ENCODE measurements at regions of chr11 and their contacts with region 1.

Region 1: GRCh38 chr11:116835791-116836631 is 1.4 kb downstream of the APOA1 start:
- DNase-seq: peak; percentile 92 to 95 (median 94)
- H3K4me3 ChIP-seq: peak overlapping the region; percentile 46 to 79 (median 59)
- H3K27ac ChIP-seq: peak overlapping the region in 1 of 2 experiments; percentile 67
- H3K4me1 ChIP-seq: peaks cover 0 to 30% (median 22%) of the 10 kb centered on the region in 4 experiments
- H3K27me3 ChIP-seq: no peaks in the 10 kb centered on the region

Region 2: GRCh38 chr11:116499396-116500003 is 336.5 kb before region 1 on chr11:
- CTCF ChIA-PET with region 1: no interaction called
- POLR2A ChIA-PET with region 1: no interaction called
- DNase-seq: peak; percentile 56 to 76 (median 70)
- H3K4me3 ChIP-seq: no peak overlapping the region
- H3K27ac ChIP-seq: no peak overlapping the region
- H3K4me1 ChIP-seq: no peaks in the 10 kb centered on the region
- H3K27me3 ChIP-seq: peaks cover 0 to 85% (median 27%) of the 10 kb centered on the region in 5 experiments

Region 3: DNA sequence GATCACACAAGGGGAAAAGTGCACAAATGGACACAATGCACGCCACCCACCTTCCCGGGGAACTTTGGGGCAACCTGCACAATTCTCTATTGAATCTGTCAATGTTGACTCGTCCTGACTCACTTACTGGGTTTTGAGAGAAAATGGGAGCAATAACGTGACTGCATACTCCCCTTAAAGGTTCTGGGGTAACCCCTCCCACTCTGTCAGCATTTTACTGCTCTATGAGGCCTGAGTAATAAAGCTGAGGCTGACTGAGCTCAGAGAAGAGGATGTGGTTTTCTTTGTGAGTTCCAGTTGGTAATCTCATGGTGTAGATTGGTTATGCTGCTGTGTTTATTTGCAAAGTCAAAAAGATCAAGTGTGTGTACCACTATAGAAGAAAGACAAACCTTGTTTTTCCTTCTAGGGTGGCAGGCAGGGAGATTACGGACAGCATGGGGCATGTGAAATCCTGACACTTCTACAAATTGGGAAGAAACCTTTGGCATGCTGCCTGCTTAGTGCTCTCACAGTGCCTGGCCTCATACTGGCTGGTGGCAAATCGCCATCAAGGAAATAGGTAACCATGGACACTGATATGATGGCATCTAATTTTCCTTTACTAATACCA is 17.6 kb after region 1 on chr11:
- CTCF ChIA-PET with region 1: interaction called, 97 read pairs
- POLR2A ChIA-PET with region 1: interaction called, 4 read pairs
- DNase-seq: peak; percentile 89 to 98 (median 97)
- H3K4me3 ChIP-seq: peak overlapping the region in 2 of 7 experiments; percentile 27 to 57
- H3K27ac ChIP-seq: peak overlapping the region; percentile 79 to 87
- H3K4me1 ChIP-seq: peaks cover 40 to 73% (median 72%) of the 10 kb centered on the region in 4 experiments
- H3K27me3 ChIP-seq: no peaks in the 10 kb centered on the region

Region 4: GRCh38 chr11:116939499-116939898 is 103.5 kb after region 1 on chr11:
- CTCF ChIA-PET with region 1: no interaction called
- POLR2A ChIA-PET with region 1: no interaction called
- DNase-seq: no peak
- H3K4me3 ChIP-seq: no peak overlapping the region
- H3K27ac ChIP-seq: no peak overlapping the region
- H3K4me1 ChIP-seq: peaks cover 5 to 49% (median 9%) of the 10 kb centered on the region in 4 experiments
- H3K27me3 ChIP-seq: no peaks in the 10 kb centered on the region